ENCODE measurements at regions of chr5 and their contacts with region 1.

Region 1: GRCh38 chr5:75053304-75054133 is 1.2 kb upstream of the GCNT4 start:
- DNase-seq: peak; percentile 61 to 74 (median 73)
- H3K4me3 ChIP-seq: peak overlapping the region; percentile 43 to 74
- H3K4me3 Mint-ChIP-seq: peak overlapping the region; percentile 89 to 93 (median 92)
- H3K27ac ChIP-seq: peak overlapping the region; percentile 67
- H3K27ac Mint-ChIP-seq: peak overlapping the region; percentile 91 to 96 (median 93)
- H3K4me1 ChIP-seq: peaks cover 78% of the 10 kb centered on the region
- H3K4me1 Mint-ChIP-seq: peaks cover 46 to 85% (median 75%) of the 10 kb centered on the region in 4 donors
- H3K27me3 ChIP-seq: no peaks in the 10 kb centered on the region
- H3K27me3 Mint-ChIP-seq: peaks cover 0 to 3% of the 10 kb centered on the region in 2 donors

Region 2: GRCh38 chr5:74934949-74935751 is 118.4 kb before region 1 on chr5:
- CTCF ChIA-PET with region 1: interaction called, 12 read pairs
- POLR2A ChIA-PET with region 1: interaction called, 7 read pairs
- intact Hi-C with region 1: loop called (anchors 2 kb)
- DNase-seq: peak in 4 of 5 donors; percentile 25 to 43 (median 30)
- H3K4me3 ChIP-seq: peak overlapping the region; percentile 2 to 8
- H3K4me3 Mint-ChIP-seq: peak overlapping the region; percentile 65 to 82 (median 74)
- H3K27ac ChIP-seq: peak overlapping the region; percentile 17
- H3K27ac Mint-ChIP-seq: peak overlapping the region; percentile 30 to 92 (median 64)
- H3K4me1 ChIP-seq: peaks cover 19% of the 10 kb centered on the region
- H3K4me1 Mint-ChIP-seq: peaks cover 16 to 30% (median 27%) of the 10 kb centered on the region in 4 donors
- H3K27me3 ChIP-seq: no peaks in the 10 kb centered on the region
- H3K27me3 Mint-ChIP-seq: no peaks in the 10 kb centered on the region

Region 3: DNA sequence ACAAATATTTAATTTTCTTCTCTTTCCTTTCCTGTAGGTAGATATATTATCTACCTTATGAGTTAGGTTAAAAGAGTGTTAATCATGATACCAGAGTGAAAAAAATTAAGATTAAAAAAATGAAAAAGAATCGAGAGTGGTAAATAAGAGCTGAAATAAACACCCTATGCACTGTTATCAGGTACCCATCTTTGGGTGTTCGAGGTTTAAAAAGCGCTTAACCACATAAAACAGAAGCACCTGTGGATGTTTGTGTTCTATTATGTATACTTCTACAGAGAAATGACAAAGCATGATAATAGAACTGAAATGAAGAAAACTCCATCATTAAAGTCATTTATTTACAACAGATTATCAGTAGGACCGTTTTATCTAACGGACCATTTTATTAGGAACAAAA is 24.5 kb after region 1 on chr5:
- CTCF ChIA-PET with region 1: interaction called, 6 read pairs
- POLR2A ChIA-PET with region 1: interaction called, 13 read pairs
- intact Hi-C with region 1: loop called (anchors 1 kb)
- DNase-seq: peak; percentile 36 to 75 (median 66)
- H3K4me3 ChIP-seq: no peak overlapping the region
- H3K4me3 Mint-ChIP-seq: peak overlapping the region in 3 of 8 donors; percentile 33 to 57 (median 52)
- H3K27ac ChIP-seq: no peak overlapping the region
- H3K27ac Mint-ChIP-seq: peak overlapping the region in 2 of 7 donors; percentile 29 to 73
- H3K4me1 ChIP-seq: peaks cover 16% of the 10 kb centered on the region
- H3K4me1 Mint-ChIP-seq: peaks cover 4 to 26% (median 15%) of the 10 kb centered on the region in 4 donors
- H3K27me3 ChIP-seq: no peaks in the 10 kb centered on the region
- H3K27me3 Mint-ChIP-seq: no peaks in the 10 kb centered on the region

Region 4: DNA sequence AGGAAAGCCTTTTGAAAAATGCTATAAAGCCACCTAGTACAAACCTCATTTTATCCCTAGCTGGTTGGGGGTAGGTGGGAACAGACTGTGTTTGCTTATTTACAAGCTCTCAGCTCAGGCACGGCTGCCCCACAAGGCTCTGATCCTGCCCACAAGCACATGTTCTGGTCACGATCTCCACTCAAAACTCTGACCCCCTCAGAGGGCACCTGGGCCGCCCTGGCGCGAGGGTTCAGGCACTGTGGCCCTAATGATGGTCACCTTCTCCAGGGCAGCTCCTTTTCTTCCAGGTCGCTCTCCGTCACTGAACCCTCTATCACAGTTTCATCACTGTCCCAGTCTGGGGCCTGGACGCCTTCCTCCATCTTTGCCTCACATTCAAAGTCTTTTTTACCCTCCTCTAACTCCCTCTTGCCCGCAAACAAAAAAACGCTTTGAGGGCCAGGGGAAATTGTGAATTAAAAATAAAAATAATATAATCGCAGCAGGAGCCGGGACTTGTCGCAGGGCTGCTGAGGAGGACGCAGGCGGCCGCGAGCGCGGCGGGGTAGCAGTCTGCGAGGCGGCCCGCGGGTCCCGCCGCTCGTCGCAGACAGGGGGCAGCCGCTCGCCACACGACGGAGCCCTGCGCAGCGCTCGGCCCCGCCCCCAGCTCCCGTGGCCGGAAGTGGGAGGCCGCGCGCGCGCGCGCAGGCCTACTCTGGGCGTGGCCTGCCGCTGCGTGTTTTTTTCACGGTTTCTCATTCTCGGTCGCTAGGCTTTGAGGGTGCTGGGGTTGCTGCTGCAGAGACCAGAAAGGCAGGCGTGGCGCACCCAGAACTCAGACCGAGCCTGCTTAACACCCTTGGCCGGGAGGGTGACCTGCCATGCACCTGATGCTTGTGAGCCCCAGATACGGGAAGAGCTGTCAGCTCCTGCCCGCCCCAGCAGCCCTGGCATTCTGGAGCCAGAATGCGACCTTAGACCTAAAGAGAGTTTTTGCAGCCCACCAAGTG is 183.1 kb after region 1 on chr5 and contains the start of gene ANKRD31:
- CTCF ChIA-PET with region 1: interaction called, 90 read pairs
- POLR2A ChIA-PET with region 1: interaction called, 46 read pairs
- intact Hi-C with region 1: loop called (anchors 1 kb)
- DNase-seq: peak; percentile 85 to 92 (median 91)
- H3K4me3 ChIP-seq: peak within 1 kb of the TSS; percentile 63 to 84
- H3K4me3 Mint-ChIP-seq: peak within 1 kb of the TSS; percentile 91 to 95 (median 94)
- H3K27ac ChIP-seq: peak within 1 kb of the TSS; percentile 69
- H3K27ac Mint-ChIP-seq: peak within 1 kb of the TSS; percentile 87 to 98 (median 98)
- H3K4me1 ChIP-seq: peaks cover 14% of the 10 kb centered on the region
- H3K4me1 Mint-ChIP-seq: peaks cover 8 to 16% (median 11%) of the 10 kb centered on the region in 4 donors
- H3K27me3 ChIP-seq: no peaks in the 10 kb centered on the region
- H3K27me3 Mint-ChIP-seq: no peaks in the 10 kb centered on the region
- total RNA-seq, gene ANKRD31: 0.73 to 0.86 TPM

Region 5: DNA sequence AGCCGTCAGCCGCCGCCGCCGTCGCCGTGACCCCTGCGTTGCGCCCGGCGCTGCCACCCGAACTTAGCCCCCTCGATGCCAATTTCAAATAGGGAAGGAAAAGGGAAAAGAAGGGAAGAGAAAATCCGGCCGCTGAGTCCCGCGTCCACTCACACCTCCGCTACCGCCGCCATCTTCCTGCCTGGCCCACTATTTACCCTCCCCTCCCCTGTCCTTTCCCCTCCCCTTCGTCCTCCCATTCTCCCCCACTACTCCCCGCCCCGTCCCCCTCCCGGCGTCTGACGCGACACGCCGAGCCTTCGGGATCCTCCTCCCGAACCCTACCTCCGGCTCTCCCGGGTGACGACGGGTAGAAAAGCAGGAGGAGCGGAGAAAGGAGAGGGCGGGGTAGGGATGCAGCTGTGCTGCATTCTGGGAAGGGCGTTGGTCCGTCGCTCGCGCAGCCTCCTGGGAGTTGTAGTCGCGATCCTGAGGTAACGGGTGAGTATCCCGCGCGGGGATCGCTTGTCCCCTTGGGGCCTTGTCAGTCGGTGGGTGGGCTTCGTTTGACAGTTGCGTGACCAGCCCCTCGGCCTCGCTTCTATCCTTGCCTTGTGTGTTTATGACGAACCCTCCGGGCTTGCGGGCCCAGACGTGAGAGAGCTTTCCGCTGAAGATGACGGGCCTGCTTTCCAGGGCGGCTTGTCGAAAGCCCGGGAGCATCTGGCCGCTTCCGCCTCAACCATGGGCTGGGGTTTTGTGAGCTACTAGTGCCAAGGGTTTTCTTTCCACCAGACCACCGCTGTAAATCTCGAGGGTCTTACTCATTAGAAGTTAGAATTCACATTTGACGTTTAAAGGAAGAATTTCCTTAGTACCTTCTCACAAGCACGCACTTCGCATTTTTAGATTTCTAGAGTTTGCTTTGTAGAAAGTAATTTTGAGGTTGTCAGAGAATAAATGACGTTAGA is 458.2 kb after region 1 on chr5 and contains the starts of genes CERT1 and POLK:
- CTCF ChIA-PET with region 1: no interaction called
- POLR2A ChIA-PET with region 1: no interaction called
- intact Hi-C with region 1: loop called (anchors 10 kb)
- DNase-seq: peak; percentile 92 to 97 (median 94)
- H3K4me3 ChIP-seq: peak within 1 kb of the TSS; percentile 54 to 81
- H3K4me3 Mint-ChIP-seq: peak within 1 kb of the TSS; percentile 90 to 97 (median 96)
- H3K27ac ChIP-seq: peak within 1 kb of the TSS; percentile 76
- H3K27ac Mint-ChIP-seq: peak within 1 kb of the TSS; percentile 94 to 98 (median 96)
- H3K4me1 ChIP-seq: peaks cover 44% of the 10 kb centered on the region
- H3K4me1 Mint-ChIP-seq: peaks cover 39 to 65% (median 49%) of the 10 kb centered on the region in 4 donors
- H3K27me3 ChIP-seq: no peaks in the 10 kb centered on the region
- H3K27me3 Mint-ChIP-seq: no peaks in the 10 kb centered on the region
- total RNA-seq, gene CERT1: 43.8 to 49.7 TPM
- total RNA-seq, gene POLK: 30.0 to 30.4 TPM